Thyroid gland (tissue), 4 donors: ENCODE measurements at regions of chr13 and their contacts with region 1.

Region 1: DNA sequence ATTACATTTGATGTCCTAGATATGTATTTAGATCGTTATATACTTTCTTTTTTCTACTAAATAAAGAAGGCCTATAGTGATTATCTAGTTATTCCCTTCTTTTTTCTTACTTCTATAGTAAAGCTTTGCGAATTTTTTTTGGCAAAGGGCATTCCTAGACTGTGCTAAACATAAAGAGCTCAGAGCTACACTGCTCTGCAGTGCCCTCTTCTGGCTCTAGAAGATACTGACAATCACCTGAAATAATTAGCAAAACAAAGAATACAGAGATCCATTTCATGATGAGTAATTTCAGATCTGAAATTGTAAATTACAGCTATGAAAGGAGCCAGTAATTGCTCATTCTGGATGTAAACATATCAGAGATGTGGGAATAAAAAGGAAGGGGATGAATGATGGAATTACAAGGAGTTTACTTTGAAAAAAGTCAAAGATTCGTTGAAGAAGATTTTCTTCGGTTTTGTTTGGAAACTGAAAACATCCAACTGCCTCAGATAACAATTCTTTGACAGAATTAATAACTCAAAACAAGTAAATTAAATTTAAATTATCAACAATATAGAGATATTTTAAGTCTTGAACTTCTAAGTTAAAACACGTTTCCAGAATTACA is 288.5 kb downstream of the NALCN start:
- DNase-seq: peak; percentile 8 to 9
- H3K4me3 ChIP-seq: no peak overlapping the region
- H3K27ac ChIP-seq: no peak overlapping the region
- H3K4me1 ChIP-seq: no peaks in the 10 kb centered on the region
- H3K27me3 ChIP-seq: no peaks in the 10 kb centered on the region
- CTCF ChIP-seq: peak; percentile 24 to 80 (median 62)
- POLR2A ChIP-seq: no peak

Region 2: DNA sequence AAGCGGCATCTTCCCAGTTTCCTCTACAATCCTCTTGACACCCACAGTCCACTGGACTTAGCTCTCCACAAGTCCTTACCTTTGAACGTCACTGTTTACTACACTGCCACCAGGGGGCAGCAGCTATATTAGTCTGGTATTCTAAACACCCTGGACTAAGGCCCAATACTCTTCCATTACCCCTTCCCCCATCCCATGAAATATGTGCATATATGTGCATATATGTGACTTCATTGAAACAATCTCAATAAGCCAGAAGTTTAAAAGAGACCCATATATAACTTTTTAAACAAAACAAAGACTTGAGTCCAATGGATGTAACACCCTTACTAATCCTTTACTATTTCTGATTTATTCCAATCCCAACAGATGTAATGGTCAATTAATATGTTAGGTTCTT is 554.7 kb before region 1 on chr13:
- intact Hi-C with region 1: loop called (anchors 5 kb)
- DNase-seq: peak; percentile 77 to 81
- H3K4me3 ChIP-seq: no peak overlapping the region
- H3K27ac ChIP-seq: no peak overlapping the region
- H3K4me1 ChIP-seq: no peaks in the 10 kb centered on the region
- H3K27me3 ChIP-seq: no peaks in the 10 kb centered on the region
- CTCF ChIP-seq: peak in 4 of 6 experiments; percentile 55 to 71 (median 60)
- POLR2A ChIP-seq: no peak